Right lobe of liver (tissue), 6 donors: ENCODE measurements at regions of chr15 and their contacts with region 1.

Region 1: DNA sequence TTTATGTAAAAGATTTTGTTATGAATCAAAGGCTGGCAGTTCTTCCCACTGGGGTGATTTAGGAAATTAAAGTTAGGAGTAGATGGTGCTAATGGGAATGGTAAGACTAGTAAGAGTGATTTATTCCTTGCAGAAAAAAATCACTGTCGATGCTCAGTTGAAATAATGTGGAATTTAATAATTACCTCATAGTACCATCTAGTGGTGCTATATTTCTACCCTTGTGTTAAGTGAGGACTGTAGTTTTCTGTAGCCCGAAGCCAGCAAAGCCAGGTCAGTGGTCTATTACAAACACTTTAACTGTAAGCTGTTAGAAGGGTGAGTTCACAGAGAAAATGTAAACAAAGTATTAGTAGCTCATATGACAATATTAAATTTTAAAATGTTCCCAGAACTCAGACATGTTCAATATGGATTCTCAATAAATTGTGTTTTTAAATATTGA is 39.5 kb upstream of the GOLGA8J start:
- DNase-seq: no peak
- ATAC-seq: peak; percentile 46 to 60 (median 51)
- H3K4me3 ChIP-seq: no peak overlapping the region
- H3K27ac ChIP-seq: no peak overlapping the region
- H3K4me1 ChIP-seq: peaks cover 0 to 13% (median 6%) of the 10 kb centered on the region in 4 donors
- H3K27me3 ChIP-seq: no peaks in the 10 kb centered on the region
- CTCF ChIP-seq: peak; percentile 41 to 56 (median 44)
- POLR2A ChIP-seq: no peak

Region 2: GRCh38 chr15:29668120-29668602 is 375.1 kb before region 1 on chr15:
- intact Hi-C with region 1: loop called in 1 of 2 experiments (anchors 10 kb)
- DNase-seq: peak; percentile 74 to 85 (median 81)
- ATAC-seq: peak; percentile 88 to 93 (median 90)
- H3K4me3 ChIP-seq: no peak overlapping the region
- H3K27ac ChIP-seq: no peak overlapping the region
- H3K4me1 ChIP-seq: peaks cover 0 to 8% (median 3%) of the 10 kb centered on the region in 4 donors
- H3K27me3 ChIP-seq: no peaks in the 10 kb centered on the region
- CTCF ChIP-seq: peak; percentile 79 to 97 (median 92)
- POLR2A ChIP-seq: no peak

Region 3: DNA sequence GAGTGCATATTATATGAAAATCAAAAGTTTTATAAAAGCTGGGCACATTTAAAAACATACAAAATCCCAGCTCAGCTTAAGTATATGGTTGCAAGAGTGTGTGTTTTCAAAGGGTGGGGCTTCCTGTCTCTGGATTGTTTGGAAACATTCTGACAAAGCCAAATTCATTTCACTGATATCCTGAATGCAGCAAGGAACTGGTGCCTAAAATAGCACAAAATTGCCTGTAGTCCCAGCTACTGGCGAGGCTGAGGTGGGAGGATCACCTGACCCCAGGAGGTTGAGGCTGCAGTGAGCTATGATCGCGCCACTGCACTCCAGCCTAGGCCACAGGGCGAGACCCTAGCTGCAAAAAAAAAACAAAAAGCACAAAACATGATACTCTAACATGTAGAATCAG is 207.9 kb before region 1 on chr15:
- intact Hi-C with region 1: no loop called
- DNase-seq: no peak
- ATAC-seq: peak; percentile 42 to 78 (median 52)
- H3K4me3 ChIP-seq: no peak overlapping the region
- H3K27ac ChIP-seq: no peak overlapping the region
- H3K4me1 ChIP-seq: peaks cover 0 to 4% (median under 1%) of the 10 kb centered on the region in 4 donors
- H3K27me3 ChIP-seq: no peaks in the 10 kb centered on the region
- CTCF ChIP-seq: no peak
- POLR2A ChIP-seq: no peak

Region 4: DNA sequence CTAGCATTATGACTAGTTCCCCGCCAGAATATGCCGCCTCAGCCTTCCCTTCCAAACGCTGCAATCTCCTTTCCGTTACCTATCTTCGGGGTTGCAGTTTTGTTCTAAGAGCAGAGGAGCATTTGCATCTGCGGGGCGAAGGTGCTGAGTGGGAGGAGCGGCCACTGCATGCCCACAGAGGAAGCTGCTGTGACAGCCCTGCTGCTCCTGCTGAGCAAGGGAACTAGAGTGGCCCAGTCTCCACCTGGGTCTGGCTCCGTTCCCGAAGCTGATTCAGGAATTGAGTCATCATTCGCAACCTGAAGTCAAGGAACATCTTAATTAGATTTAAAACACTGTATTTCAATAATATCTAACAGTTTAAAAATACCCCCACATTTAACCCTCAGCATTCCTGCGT is 122.7 kb before region 1 on chr15:
- intact Hi-C with region 1: no loop called
- DNase-seq: no peak
- ATAC-seq: peak in 2 of 4 donors; percentile 20 to 60
- H3K4me3 ChIP-seq: no peak overlapping the region
- H3K27ac ChIP-seq: no peak overlapping the region
- H3K4me1 ChIP-seq: peaks cover 0 to 5% (median under 1%) of the 10 kb centered on the region in 4 donors
- H3K27me3 ChIP-seq: no peaks in the 10 kb centered on the region
- CTCF ChIP-seq: no peak
- POLR2A ChIP-seq: no peak